A549 (cell line): ENCODE measurements at regions of chr3 and their contacts with region 1.

Region 1: GRCh38 chr3:119891944-119892721 is 110.2 kb downstream of the NR1I2 start:
- DNase-seq: peak; percentile 8 to 74
- ATAC-seq: peak; percentile 86 to 93
- H3K4me3 ChIP-seq: no peak overlapping the region
- H3K27ac ChIP-seq: no peak overlapping the region
- H3K4me1 ChIP-seq: no peaks in the 10 kb centered on the region
- CTCF ChIP-seq: peak; percentile 88
- EP300 ChIP-seq: no peak
- POLR2A ChIP-seq: no peak
- RAD21 ChIP-seq: peak; percentile 89 to 92

Region 2: GRCh38 chr3:119880966-119881365 is 11.2 kb before region 1 on chr3:
- CTCF ChIA-PET with region 1: interaction called, 21 read pairs
- POLR2A ChIA-PET with region 1: no interaction called
- DNase-seq: no peak
- ATAC-seq: no peak
- H3K4me3 ChIP-seq: no peak overlapping the region
- H3K27ac ChIP-seq: no peak overlapping the region
- H3K4me1 ChIP-seq: no peaks in the 10 kb centered on the region
- CTCF ChIP-seq: no peak
- EP300 ChIP-seq: no peak
- POLR2A ChIP-seq: no peak
- RAD21 ChIP-seq: no peak

Region 3: GRCh38 chr3:120182724-120183524 is 290.8 kb after region 1 on chr3:
- CTCF ChIA-PET with region 1: interaction called, 16 read pairs
- POLR2A ChIA-PET with region 1: no interaction called
- DNase-seq: peak in 1 of 2 experiments; percentile 34
- ATAC-seq: peak in 1 of 2 experiments; percentile 65; a peak in 3 of 6 replicates
- H3K4me3 ChIP-seq: no peak overlapping the region
- H3K27ac ChIP-seq: peak overlapping the region; percentile 7 to 50; a peak in 4 of 6 replicates
- H3K4me1 ChIP-seq: peaks cover 25% of the 10 kb centered on the region
- CTCF ChIP-seq: peak; percentile 64
- EP300 ChIP-seq: no peak
- POLR2A ChIP-seq: no peak
- RAD21 ChIP-seq: peak; percentile 69 to 84

Region 4: GRCh38 chr3:120198305-120198878 is 306.3 kb after region 1 on chr3:
- CTCF ChIA-PET with region 1: interaction called, 26 read pairs
- POLR2A ChIA-PET with region 1: no interaction called
- DNase-seq: peak; percentile 24 to 59
- ATAC-seq: peak; percentile 81 to 87
- H3K4me3 ChIP-seq: no peak overlapping the region
- H3K27ac ChIP-seq: no peak overlapping the region
- H3K4me1 ChIP-seq: peaks cover 7% of the 10 kb centered on the region; the same call in 1 of the 3 replicates
- CTCF ChIP-seq: peak; percentile 56
- EP300 ChIP-seq: no peak
- POLR2A ChIP-seq: no peak
- RAD21 ChIP-seq: peak; percentile 81 to 83